AG04450 (cell line): ENCODE measurements at regions of chr5 and their contacts with region 1.

Region 1: DNA sequence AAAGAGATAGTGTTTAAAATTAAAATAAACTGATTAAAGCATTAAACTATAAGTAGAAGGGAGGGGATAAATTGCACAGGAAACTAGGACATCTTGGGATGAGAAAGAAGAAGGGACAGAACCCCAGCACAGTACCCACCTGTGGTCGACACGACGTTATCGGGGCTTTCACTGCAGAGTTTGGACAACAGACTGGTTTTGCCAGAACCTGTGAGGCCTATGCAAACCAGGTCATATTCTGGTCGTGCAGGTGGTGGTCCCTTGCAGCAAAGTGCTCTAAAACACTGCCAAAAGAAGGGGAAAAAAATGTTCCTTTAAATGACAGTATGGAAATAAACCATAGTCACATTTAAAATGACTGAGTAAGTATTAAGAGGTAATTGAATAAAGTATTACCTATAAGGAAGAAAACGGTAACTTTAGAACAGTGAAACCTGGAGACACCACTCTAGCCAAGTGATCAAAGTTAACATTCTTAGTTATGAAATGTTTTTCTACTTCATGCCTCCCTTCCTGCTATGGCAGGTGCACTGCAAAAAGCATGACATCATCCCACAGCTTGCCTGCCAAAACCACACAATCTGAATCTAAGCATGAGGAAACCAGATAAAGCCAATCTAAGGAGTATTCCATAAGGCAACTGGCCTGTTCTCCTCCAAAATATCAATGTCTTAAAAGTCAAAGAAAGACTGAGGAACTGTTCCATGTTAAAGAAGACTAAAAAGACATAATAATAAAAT is 138.6 kb downstream of the ARL15 start:
- DNase-seq: peak; percentile 32
- H3K4me3 ChIP-seq: no peak overlapping the region
- H3K27ac ChIP-seq: no peak overlapping the region
- H3K27me3 ChIP-seq: no peaks in the 10 kb centered on the region
- CTCF ChIP-seq: no peak

Region 2: DNA sequence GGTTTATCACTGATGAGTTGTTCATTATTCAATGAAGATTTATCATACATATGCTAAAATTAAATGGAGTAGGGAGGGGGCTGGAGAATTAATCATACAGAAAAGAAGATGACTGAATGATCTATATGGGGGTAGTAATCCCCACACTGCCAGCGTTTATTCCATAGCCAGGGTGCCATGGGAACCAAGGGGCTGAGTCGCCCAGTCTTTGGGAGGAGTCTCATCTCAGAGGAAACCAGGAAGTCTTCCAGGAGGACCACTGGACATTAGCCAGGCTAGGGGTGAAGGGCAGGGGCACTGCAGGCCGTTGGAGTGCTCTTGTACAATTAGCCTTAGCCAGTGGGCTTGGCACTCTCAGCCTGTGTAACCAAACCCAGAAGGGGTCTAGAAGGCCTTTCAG is 88.0 kb before region 1 on chr5:
- CTCF ChIA-PET with region 1: no interaction called
- POLR2A ChIA-PET with region 1: no interaction called
- DNase-seq: no peak
- H3K4me3 ChIP-seq: no peak overlapping the region
- H3K27ac ChIP-seq: no peak overlapping the region
- H3K27me3 ChIP-seq: no peaks in the 10 kb centered on the region
- CTCF ChIP-seq: no peak

Region 3: DNA sequence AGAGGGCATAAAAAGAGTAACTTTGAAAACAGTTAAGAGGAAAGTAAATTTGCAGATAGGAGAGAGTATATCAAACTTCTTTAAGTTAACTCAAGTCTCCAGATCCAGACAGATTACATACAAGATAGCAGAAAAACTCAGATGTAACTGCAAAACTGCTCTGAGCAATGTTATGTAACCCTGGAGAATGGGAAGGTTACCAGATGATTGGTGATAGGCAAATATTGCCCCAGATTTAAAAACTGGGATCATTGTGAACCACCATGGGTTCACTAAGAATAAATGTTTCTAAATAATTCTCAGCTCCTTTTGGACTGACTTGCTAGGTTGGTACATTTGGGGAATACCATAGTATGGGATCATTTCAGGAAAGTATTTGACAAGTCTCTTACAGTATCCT is 37.9 kb before region 1 on chr5:
- CTCF ChIA-PET with region 1: no interaction called
- POLR2A ChIA-PET with region 1: interaction called, 10 read pairs
- DNase-seq: no peak
- H3K4me3 ChIP-seq: no peak overlapping the region
- H3K27ac ChIP-seq: no peak overlapping the region
- H3K27me3 ChIP-seq: no peaks in the 10 kb centered on the region
- CTCF ChIP-seq: no peak